ENCODE measurements at regions of chr16 and their contacts with region 1.

Region 1: GRCh38 chr16:69831212-69832123 is 69.3 kb downstream of the WWP2 start:
- DNase-seq: no peak
- H3K4me3 Mint-ChIP-seq: no peak overlapping the region
- H3K27ac Mint-ChIP-seq: peak overlapping the region; percentile 8
- H3K4me1 Mint-ChIP-seq: peaks cover 31% of the 10 kb centered on the region
- H3K27me3 Mint-ChIP-seq: no peaks in the 10 kb centered on the region
- CTCF ChIP-seq: no peak

Region 2: DNA sequence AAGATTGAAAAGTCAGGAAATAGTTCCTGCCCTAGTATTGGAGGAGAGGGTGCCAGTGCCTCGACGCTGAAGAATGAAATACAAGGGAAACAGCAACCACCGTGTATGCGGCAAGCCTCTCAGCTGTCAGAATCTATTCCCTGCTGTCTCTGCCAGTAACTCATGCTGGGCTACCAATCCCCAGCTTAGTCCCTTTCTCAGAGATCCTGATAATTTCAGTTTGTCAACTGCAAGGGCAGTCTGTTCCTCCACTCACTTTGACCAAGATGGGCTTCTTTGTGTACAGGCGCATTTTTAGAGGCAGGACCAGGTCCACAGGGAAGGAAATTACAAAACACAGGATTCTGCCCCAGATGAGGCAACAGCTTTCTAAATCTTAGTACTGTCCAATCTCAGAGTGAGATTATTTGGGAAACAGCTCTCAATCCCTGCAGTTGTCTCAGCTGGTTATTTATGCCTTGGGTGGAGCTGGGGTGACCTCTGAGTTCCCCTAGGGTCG is 106.4 kb before region 1 on chr16:
- CTCF ChIA-PET with region 1: no interaction called
- intact Hi-C with region 1: no loop called
- DNase-seq: no peak
- H3K4me3 Mint-ChIP-seq: peak overlapping the region; percentile 81
- H3K27ac Mint-ChIP-seq: peak overlapping the region; percentile 99
- H3K4me1 Mint-ChIP-seq: peaks cover 43% of the 10 kb centered on the region
- H3K27me3 Mint-ChIP-seq: no peaks in the 10 kb centered on the region
- CTCF ChIP-seq: no peak

Region 3: DNA sequence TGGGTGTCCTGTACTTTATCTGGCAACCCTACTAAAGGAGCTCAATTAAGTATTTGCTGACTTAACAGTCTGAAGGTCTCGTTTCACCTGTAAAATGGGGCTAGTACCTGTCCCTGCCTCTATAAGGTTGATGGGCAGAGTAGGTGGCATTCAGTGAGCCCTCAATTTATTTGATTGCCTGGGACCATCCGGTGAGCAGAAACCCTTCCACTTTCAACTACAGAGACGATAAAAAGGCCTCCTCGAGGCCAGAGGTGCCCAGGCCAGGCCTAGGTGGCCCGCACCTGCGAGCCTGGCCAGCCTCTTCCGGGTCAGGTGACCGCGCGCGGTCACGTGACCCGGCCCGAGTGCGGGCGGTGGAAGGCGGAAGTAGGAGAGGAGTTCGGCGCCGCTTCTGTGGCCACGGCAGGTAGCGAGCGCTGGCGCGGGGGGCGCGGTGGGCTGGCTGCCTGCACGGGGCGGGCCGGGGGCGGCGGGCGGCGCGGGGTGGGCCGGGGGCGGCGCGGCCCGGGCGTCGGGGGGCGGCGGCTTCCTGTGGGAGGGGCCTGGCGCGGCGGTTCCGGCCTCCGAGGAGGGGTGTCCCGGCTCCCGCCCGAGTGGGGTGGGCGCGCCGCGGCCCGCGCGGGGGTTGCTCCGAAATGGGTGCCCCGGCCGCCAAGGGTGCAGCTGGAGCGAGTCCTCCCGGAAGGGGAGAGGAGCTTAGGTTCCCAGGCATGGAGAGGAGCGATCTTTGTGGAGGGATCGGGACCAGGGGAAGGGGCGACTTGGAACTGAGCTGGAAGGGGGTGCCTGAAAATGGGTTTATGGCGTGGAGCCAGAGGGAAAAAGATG is 69.3 kb before region 1 on chr16 and contains the start of gene WWP2:
- CTCF ChIA-PET with region 1: no interaction called
- intact Hi-C with region 1: no loop called
- DNase-seq: peak; percentile 79
- H3K4me3 Mint-ChIP-seq: peak within 1 kb of the TSS; percentile 99
- H3K27ac Mint-ChIP-seq: peak within 1 kb of the TSS; percentile 97
- H3K4me1 Mint-ChIP-seq: peaks cover 16% of the 10 kb centered on the region
- H3K27me3 Mint-ChIP-seq: peaks cover 3% of the 10 kb centered on the region
- CTCF ChIP-seq: no peak
- total RNA-seq, gene WWP2: 47.5 and 53.8 TPM in 2 replicates

Region 4: GRCh38 chr16:69796351-69797118 is 34.9 kb before region 1 on chr16:
- CTCF ChIA-PET with region 1: no interaction called
- intact Hi-C with region 1: no loop called
- DNase-seq: peak; percentile 55
- H3K4me3 Mint-ChIP-seq: no peak overlapping the region
- H3K27ac Mint-ChIP-seq: no peak overlapping the region
- H3K4me1 Mint-ChIP-seq: no peaks in the 10 kb centered on the region
- H3K27me3 Mint-ChIP-seq: no peaks in the 10 kb centered on the region
- CTCF ChIP-seq: peak; percentile 84

Region 5: DNA sequence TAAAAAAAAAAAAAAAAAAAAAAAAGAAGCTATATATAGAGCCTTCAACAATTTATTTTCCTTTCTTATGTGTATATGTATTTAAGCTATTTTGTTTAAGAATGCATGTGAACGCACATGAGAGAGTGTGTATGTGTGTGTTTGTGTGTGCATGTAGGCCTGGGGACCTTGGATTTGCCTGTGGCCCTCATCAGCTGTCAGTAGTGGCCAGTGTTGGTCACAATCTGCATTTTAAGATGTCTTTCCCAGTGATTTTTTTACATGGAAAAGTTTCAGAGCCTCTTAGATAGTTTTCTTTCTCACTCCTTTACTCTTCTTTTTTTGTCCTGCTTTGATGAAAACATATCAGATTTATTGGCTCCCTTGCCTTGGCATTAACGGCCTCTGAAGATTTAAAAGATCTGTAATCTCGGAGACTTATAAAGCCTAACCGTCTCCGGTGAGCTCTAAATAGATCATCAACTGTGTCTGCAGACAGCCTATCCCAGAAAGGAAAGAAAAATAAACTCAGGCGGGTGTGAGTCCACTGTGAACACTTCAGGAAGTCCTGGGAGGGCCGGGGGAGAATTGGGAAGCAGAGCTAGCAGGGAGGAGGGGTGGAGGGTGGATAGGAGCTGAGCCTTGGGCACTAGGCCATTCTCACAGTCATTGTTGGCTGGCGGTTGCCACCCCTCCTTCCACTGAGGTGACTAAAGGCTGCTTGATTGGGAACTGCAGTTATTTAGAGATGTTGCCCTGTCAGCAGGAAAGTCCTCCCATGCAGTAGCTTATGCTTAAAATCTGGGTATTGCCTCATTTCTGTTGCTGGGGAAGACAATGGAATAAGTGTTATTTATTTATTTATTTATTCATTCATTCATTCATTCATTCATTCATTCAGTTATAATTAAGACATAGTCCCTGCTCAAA is 17.4 kb after region 1 on chr16:
- CTCF ChIA-PET with region 1: no interaction called
- intact Hi-C with region 1: loop called (anchors 2 kb)
- DNase-seq: no peak
- H3K4me3 Mint-ChIP-seq: no peak overlapping the region
- H3K27ac Mint-ChIP-seq: no peak overlapping the region
- H3K4me1 Mint-ChIP-seq: no peaks in the 10 kb centered on the region
- H3K27me3 Mint-ChIP-seq: no peaks in the 10 kb centered on the region
- CTCF ChIP-seq: no peak

Measured in Calu3 (cell line).